ENCODE measurements at regions of chr1 and their contacts with region 1.

Region 1: DNA sequence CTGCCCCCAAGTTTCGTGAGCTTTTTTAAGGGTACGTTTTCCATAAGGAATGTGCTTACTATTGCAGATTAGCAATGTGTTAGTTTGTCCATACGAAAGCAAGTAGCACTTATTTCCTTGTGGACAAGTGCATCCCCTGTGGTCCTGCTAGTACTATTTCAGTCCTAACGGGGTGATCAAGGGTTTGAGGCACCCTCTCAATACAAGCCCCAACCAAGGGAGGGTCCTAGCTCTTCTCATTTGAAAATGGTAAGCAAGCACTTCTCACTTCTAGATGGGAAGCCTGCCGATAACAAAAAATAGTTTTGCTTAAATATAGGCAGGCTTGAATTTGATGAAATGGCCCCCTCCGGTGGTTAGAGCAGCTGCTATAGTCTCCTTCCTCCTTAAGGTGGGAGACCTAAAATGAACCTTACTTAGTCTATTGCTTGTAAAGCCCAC is 64.0 kb upstream of the HMCN1 start:
- DNase-seq: no peak
- CTCF ChIP-seq: no peak

Region 2: DNA sequence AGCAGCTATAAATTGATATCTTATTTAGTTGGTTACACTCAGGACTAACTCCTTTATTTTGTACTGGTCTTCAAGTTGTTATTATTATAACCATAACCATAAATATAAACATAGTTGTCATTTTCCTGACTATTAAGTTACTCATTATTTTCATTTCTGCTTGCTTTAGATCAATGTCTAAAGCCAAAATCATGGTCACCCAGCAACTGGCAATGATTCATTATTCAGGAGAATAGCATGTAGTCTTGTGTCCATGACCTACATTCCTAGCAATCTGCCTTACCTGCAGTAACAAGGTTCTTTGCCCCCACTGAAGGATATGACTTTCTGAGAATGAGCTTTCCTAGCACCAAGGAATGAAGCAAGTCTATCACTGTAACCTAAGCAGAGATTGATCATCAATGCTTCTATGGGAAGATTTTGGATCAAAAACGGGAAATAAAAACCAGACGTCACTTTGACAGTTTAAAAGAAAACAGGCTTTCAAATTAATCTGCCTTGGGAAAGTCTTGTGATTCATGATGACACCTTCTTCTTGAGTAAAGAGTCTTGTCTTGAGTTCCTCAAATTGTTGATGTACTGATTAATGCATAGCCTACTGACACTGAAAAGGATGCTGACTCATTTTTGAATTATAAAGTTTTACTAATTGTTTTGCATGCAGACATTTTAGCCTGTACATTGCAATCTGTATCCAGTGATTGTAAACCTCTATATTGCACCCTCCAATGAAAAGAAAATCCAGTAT is 149.8 kb before region 1 on chr1:
- CTCF ChIA-PET with region 1: no interaction called
- POLR2A ChIA-PET with region 1: no interaction called
- DNase-seq: no peak
- CTCF ChIP-seq: no peak

Region 3: GRCh38 chr1:185681034-185681633 is 10.9 kb after region 1 on chr1:
- CTCF ChIA-PET with region 1: interaction called, 21 read pairs
- POLR2A ChIA-PET with region 1: no interaction called
- DNase-seq: peak; percentile 25
- CTCF ChIP-seq: peak; percentile 46

Region 4: DNA sequence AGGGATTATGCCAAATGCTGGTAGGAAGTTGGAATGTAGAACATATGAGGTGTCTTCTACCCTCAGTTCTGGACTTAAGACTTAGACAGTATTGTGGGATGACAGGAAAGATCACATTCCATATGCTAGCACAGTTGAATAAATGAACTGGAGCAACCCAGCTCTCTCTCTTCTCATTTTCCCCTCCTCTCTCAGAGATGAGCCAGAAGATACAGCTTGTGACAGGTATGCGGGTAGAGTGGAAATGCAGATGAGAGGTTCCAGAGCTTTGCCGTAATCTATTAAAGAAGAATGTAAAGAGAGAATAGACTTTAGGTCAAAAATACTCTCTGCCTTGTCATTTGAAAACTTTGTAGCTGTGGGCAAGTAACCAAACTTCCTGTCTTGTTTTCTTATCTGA is 31.4 kb after region 1 on chr1:
- CTCF ChIA-PET with region 1: no interaction called
- POLR2A ChIA-PET with region 1: no interaction called
- DNase-seq: no peak
- CTCF ChIP-seq: no peak

Region 5: GRCh38 chr1:185869590-185869989 is 199.4 kb after region 1 on chr1:
- CTCF ChIA-PET with region 1: no interaction called
- POLR2A ChIA-PET with region 1: no interaction called
- DNase-seq: no peak
- CTCF ChIP-seq: no peak

Region 6: GRCh38 chr1:185998390-185998789 is 328.2 kb after region 1 on chr1:
- CTCF ChIA-PET with region 1: no interaction called
- POLR2A ChIA-PET with region 1: no interaction called
- DNase-seq: no peak
- CTCF ChIP-seq: no peak